CD8-positive, alpha-beta T cell (primary cell): ENCODE measurements at regions of chr2 and their contacts with region 1.

Region 1: DNA sequence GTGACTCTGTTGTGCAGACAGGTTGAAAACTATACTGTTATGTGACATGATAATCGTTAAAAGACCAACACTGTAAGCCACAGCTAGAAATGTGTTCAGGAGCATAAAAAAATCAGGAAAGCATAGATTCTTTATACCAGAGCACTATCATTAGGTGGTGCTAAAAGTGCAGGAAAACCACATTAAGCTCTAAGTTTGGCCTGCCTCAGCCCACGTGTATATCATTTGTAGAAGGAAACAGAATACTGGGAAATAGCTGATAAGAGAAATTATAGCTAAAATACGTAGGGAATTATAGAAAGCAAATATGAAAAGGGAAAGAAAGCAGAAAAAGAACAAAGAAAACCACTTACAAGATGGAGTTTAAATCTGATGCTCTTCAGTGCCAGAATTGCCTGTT is 26.5 kb upstream of the C2orf74 start:
- DNase-seq: peak in 2 of 9 experiments; percentile 34 to 50
- ATAC-seq: no peak
- H3K4me3 ChIP-seq: no peak overlapping the region
- H3K4me3 Mint-ChIP-seq: no peak overlapping the region
- H3K27ac ChIP-seq: no peak overlapping the region
- H3K27ac Mint-ChIP-seq: no peak overlapping the region
- H3K4me1 ChIP-seq: no peaks in the 10 kb centered on the region
- H3K4me1 Mint-ChIP-seq: peaks cover 2% of the 10 kb centered on the region
- H3K27me3 ChIP-seq: no peaks in the 10 kb centered on the region
- H3K27me3 Mint-ChIP-seq: no peaks in the 10 kb centered on the region
- CTCF ChIP-seq: no peak

Region 2: DNA sequence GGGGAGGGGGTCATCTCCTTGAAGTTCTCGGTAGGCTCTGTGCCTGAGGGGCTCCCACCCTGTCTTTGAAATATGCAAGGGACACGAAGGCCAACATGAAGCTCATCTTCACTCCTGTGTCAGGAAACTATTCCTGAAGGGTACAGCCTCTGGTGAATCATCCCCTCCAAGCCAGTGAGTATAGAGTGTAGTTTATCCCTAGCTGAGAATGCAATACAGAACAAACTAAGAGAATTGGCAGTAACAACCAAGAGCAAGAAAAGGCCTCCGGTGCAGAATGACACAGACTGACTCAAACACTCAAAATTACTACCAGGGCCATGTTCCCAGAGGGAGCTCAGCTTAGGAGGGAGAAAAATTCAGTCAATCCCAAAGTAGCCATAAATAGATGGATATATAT is 995.3 kb before region 1 on chr2:
- CTCF ChIA-PET with region 1: no interaction called
- POLR2A ChIA-PET with region 1: no interaction called
- intact Hi-C with region 1: no loop called
- DNase-seq: no peak
- ATAC-seq: no peak
- H3K4me3 ChIP-seq: no peak overlapping the region
- H3K4me3 Mint-ChIP-seq: no peak overlapping the region
- H3K27ac ChIP-seq: no peak overlapping the region
- H3K27ac Mint-ChIP-seq: no peak overlapping the region
- H3K4me1 ChIP-seq: no peaks in the 10 kb centered on the region
- H3K4me1 Mint-ChIP-seq: peaks cover 5% of the 10 kb centered on the region
- H3K27me3 ChIP-seq: no peaks in the 10 kb centered on the region
- H3K27me3 Mint-ChIP-seq: peaks cover 3% of the 10 kb centered on the region
- CTCF ChIP-seq: no peak

Region 3: GRCh38 chr2:60852282-60852860 is 283.1 kb before region 1 on chr2:
- CTCF ChIA-PET with region 1: no interaction called
- POLR2A ChIA-PET with region 1: no interaction called
- intact Hi-C with region 1: no loop called
- DNase-seq: no peak
- ATAC-seq: no peak
- H3K4me3 ChIP-seq: no peak overlapping the region
- H3K4me3 Mint-ChIP-seq: no peak overlapping the region
- H3K27ac ChIP-seq: no peak overlapping the region
- H3K27ac Mint-ChIP-seq: no peak overlapping the region
- H3K4me1 ChIP-seq: no peaks in the 10 kb centered on the region
- H3K4me1 Mint-ChIP-seq: no peaks in the 10 kb centered on the region
- H3K27me3 ChIP-seq: no peaks in the 10 kb centered on the region
- H3K27me3 Mint-ChIP-seq: no peaks in the 10 kb centered on the region
- CTCF ChIP-seq: no peak

Region 4: DNA sequence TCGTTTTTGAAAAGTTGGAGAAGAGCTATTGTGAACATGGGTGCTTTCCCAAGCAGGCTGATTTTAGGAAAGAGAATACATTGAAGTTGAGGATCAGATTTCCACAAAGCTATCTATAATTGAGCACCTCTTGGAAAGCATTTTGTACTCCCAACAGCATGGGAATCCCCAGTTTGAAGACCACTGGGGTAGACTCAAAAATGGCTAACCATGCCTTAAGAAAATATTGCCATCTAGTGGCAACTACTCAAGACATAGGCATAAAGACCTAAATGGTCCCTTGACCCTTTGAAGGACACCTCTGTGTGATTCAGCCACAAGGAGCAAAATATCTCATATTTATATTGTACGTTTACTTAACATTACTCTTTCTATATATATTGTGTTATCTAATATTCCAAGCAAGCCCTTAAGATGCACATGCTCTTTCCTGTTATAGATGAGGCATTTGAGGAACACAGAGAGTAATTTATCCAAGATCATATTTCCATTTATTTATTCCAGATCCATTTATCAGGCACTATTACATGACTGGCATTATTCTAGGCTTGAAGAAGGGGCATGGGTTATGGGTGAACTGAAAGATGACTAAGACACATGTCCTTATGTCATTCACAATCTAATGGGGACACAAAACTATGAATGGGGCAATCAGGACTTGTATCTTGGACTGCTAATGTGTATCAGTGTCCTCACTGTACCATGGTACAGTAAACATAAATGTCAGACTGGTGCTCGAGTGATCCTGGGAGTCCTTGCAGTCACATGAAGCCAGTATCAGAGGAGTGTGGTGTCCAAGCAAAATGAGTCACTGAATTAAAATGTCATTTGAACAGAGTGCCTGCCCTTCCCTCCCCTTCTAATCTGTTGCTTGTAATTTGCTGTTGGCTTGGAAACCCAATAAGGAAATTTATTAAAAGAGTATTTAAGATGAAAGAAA is 523.6 kb after region 1 on chr2:
- CTCF ChIA-PET with region 1: no interaction called
- POLR2A ChIA-PET with region 1: no interaction called
- intact Hi-C with region 1: loop called in 1 of 2 experiments (anchors 5 kb)
- DNase-seq: peak in 2 of 9 experiments; percentile 25 to 49
- ATAC-seq: no peak
- H3K4me3 ChIP-seq: no peak overlapping the region
- H3K4me3 Mint-ChIP-seq: no peak overlapping the region
- H3K27ac ChIP-seq: no peak overlapping the region
- H3K27ac Mint-ChIP-seq: no peak overlapping the region
- H3K4me1 ChIP-seq: no peaks in the 10 kb centered on the region
- H3K4me1 Mint-ChIP-seq: peaks cover 9% of the 10 kb centered on the region
- H3K27me3 ChIP-seq: no peaks in the 10 kb centered on the region
- H3K27me3 Mint-ChIP-seq: no peaks in the 10 kb centered on the region
- CTCF ChIP-seq: peak; percentile 20